ENCODE measurements at regions of chr1 and their contacts with region 1.

Region 1: GRCh38 chr1:246497331-246497915 is 9.7 kb downstream of the SMYD3 start:
- DNase-seq: peak; percentile 64
- CTCF ChIP-seq: peak; percentile 68

Region 2: GRCh38 chr1:246295968-246296367 is 201.5 kb before region 1 on chr1:
- in situ Hi-C with region 1: no loop called
- DNase-seq: no peak
- CTCF ChIP-seq: no peak

Region 3: GRCh38 chr1:246699095-246699735 is 201.8 kb after region 1 on chr1:
- in situ Hi-C with region 1: loop called (anchors 10 kb)
- DNase-seq: peak; percentile 91
- CTCF ChIP-seq: peak; percentile 80

Measured in GM13977 (cell line).